ENCODE measurements at regions of chr10 and their contacts with region 1.

Region 1: GRCh38 chr10:114103284-114103683 is 59.6 kb downstream of the ADRB1 start:
- DNase-seq: no peak
- ATAC-seq: peak; percentile 48 to 79 (median 72)
- H3K4me3 ChIP-seq: no peak overlapping the region
- H3K27ac ChIP-seq: no peak overlapping the region
- H3K4me1 ChIP-seq: peaks cover 0 to 32% (median 8%) of the 10 kb centered on the region in 12 donors
- H3K27me3 ChIP-seq: peaks cover 0 to 12% (median 0%) of the 10 kb centered on the region in 9 donors
- CTCF ChIP-seq: peak; percentile 37 to 69 (median 61)
- POLR2A ChIP-seq: no peak

Region 2: GRCh38 chr10:113697595-113697994 is 405.7 kb before region 1 on chr10:
- intact Hi-C with region 1: loop called in 5 of 10 experiments (anchors 5 to 10 kb)
- DNase-seq: no peak
- ATAC-seq: peak in 1 of 4 donors; percentile 59
- H3K4me3 ChIP-seq: no peak overlapping the region
- H3K27ac ChIP-seq: no peak overlapping the region
- H3K4me1 ChIP-seq: peaks cover 0 to 4% (median 0%) of the 10 kb centered on the region in 12 donors
- H3K27me3 ChIP-seq: no peaks in the 10 kb centered on the region
- CTCF ChIP-seq: no peak
- POLR2A ChIP-seq: no peak

Region 3: DNA sequence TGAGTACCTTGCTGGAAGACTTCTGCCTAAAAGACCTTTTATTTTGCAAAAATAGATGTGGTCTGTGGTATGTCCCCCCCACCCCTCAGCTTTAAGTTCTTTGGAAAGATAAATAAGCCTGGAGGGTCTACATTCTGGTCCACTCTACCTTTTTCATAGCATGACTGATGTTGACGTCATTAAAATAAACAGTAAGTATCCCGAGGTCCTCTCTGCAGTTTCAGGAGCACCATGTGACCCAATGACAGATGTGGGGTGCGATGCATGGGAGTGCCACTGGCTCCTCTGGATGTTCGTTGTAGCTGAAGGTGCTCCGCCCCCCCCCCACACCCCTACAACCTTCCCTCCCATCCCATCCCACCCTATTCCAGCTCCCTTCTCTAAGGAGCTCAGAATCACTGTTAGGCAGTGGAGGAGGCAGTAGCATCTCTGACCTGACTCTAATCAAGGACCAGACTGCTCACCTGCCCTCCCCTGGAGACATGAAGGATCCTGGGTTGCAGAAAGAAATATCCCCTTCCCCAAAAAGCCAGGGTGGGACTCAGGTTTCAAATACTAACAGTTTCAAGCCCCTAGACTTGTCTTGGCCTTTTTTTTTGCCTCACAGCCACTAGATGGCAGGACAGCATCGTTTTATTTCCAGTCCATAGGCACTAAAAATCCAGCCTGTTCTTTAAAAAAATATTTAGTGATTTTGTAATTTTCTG is 398.5 kb before region 1 on chr10:
- intact Hi-C with region 1: loop called (anchors 2 to 10 kb)
- DNase-seq: no peak
- ATAC-seq: peak in 1 of 4 donors; percentile 46
- H3K4me3 ChIP-seq: no peak overlapping the region
- H3K27ac ChIP-seq: no peak overlapping the region
- H3K4me1 ChIP-seq: peaks cover 0 to 21% (median 0%) of the 10 kb centered on the region in 12 donors
- H3K27me3 ChIP-seq: no peaks in the 10 kb centered on the region
- CTCF ChIP-seq: peak; percentile 36 to 74 (median 58)
- POLR2A ChIP-seq: no peak

Region 4: DNA sequence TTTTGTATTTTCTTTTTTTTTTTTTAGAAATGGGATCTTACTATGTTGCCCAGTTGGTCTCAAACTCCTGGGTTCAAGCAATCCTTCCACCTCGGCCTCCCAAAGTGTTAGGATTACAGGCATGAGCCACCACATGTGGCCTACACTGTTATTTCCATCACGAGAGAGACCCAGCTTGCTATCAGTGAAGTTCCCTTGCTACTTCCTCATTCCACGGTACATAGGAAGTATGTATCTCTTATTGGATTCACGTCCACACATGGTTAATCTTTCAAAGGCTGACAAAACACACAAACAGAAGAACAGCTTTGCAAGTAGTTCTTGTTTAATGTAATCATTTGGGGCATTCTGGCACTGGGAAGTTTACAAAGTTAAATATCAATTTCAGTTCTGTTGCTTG is 300.3 kb before region 1 on chr10:
- intact Hi-C with region 1: loop called (anchors 1 to 2 kb)
- DNase-seq: no peak
- ATAC-seq: no peak
- H3K4me3 ChIP-seq: no peak overlapping the region
- H3K27ac ChIP-seq: no peak overlapping the region
- H3K4me1 ChIP-seq: peaks cover 0 to 6% (median 0%) of the 10 kb centered on the region in 12 donors
- H3K27me3 ChIP-seq: no peaks in the 10 kb centered on the region
- CTCF ChIP-seq: no peak
- POLR2A ChIP-seq: no peak

Region 5: GRCh38 chr10:113854011-113854760 is 249.1 kb before region 1 on chr10 and contains the starts of genes DCLRE1A and NHLRC2:
- intact Hi-C with region 1: loop called in 1 of 10 experiments (anchors 5 kb)
- DNase-seq: peak; percentile 81 to 90 (median 86)
- ATAC-seq: peak; percentile 72 to 88 (median 86)
- H3K4me3 ChIP-seq: peak within 1 kb of the TSS; percentile 63 to 97 (median 88)
- H3K27ac ChIP-seq: peak within 1 kb of the TSS; percentile 79 to 98 (median 95)
- H3K4me1 ChIP-seq: peaks cover 0 to 59% (median 42%) of the 10 kb centered on the region in 12 donors
- H3K27me3 ChIP-seq: no peaks in the 10 kb centered on the region
- CTCF ChIP-seq: no peak
- POLR2A ChIP-seq: peak in 1 of 2 donors; percentile 33
- total RNA-seq, gene DCLRE1A: 5.1 to 8.5 (median 6.3) TPM
- total RNA-seq, gene NHLRC2: 50.2 to 105 (median 78.3) TPM

Region 6: GRCh38 chr10:113891476-113891875 is 211.8 kb before region 1 on chr10:
- intact Hi-C with region 1: loop called in 3 of 10 experiments (anchors 5 to 10 kb)
- DNase-seq: peak in 1 of 5 donors; percentile 13
- ATAC-seq: peak; percentile 82 to 94 (median 87)
- H3K4me3 ChIP-seq: no peak overlapping the region
- H3K27ac ChIP-seq: peak overlapping the region in 9 of 12 donors; percentile 12 to 70 (median 32)
- H3K4me1 ChIP-seq: peaks cover 0 to 52% (median 9%) of the 10 kb centered on the region in 12 donors
- H3K27me3 ChIP-seq: no peaks in the 10 kb centered on the region
- CTCF ChIP-seq: peak in 5 of 12 donors; percentile 16 to 31 (median 21)
- POLR2A ChIP-seq: no peak

Region 7: DNA sequence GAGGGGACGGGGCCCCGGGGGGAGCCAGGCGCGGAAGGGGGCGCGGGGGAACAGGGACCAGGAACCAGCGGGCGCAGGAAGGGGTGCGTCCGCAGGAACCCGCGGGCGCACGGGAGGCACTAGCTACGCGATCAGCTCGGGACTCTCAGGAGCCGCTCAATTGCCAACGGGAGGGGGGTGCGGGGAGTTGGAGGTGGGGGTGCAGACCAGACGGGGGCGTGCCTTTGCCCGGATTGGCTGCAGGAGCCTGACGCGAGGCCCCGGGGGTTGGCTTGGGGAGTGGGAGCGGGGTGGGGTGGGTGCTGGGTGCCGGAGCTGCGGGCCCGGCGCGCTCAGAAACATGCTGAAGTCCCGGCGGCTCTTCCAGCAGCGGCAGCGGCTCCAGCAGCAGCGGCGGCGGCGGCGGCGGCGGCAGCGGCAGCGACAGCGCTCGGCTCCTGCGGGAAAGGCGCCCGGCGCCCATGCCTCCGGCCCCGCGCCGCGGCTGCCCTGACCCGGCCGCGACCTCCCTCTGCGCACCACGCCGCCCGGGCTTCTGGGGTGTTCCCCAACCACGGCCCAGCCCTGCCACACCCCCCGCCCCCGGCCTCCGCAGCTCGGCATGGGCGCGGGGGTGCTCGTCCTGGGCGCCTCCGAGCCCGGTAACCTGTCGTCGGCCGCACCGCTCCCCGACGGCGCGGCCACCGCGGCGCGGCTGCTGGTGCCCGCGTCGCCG is 59.6 kb before region 1 on chr10 and contains the start of gene ADRB1:
- intact Hi-C with region 1: loop called in 1 of 10 experiments (anchors 5 kb)
- DNase-seq: peak; percentile 92 to 97 (median 95)
- ATAC-seq: peak; percentile 90 to 93 (median 92)
- H3K4me3 ChIP-seq: peak within 1 kb of the TSS; percentile 42 to 80 (median 64)
- H3K27ac ChIP-seq: peak within 1 kb of the TSS; percentile 72 to 93 (median 90)
- H3K4me1 ChIP-seq: peaks cover 0 to 25% (median 2%) of the 10 kb centered on the region in 12 donors
- H3K27me3 ChIP-seq: peaks cover 0 to 63% (median 0%) of the 10 kb centered on the region in 9 donors
- CTCF ChIP-seq: no peak
- POLR2A ChIP-seq: peak; percentile 53 to 89
- total RNA-seq, gene ADRB1: 28.3 to 115 (median 59.4) TPM

Measured in heart left ventricle (tissue), 16 donors.